Thyroid gland (tissue), 4 donors: ENCODE measurements at regions of chr17 and their contacts with region 1.

Region 1: DNA sequence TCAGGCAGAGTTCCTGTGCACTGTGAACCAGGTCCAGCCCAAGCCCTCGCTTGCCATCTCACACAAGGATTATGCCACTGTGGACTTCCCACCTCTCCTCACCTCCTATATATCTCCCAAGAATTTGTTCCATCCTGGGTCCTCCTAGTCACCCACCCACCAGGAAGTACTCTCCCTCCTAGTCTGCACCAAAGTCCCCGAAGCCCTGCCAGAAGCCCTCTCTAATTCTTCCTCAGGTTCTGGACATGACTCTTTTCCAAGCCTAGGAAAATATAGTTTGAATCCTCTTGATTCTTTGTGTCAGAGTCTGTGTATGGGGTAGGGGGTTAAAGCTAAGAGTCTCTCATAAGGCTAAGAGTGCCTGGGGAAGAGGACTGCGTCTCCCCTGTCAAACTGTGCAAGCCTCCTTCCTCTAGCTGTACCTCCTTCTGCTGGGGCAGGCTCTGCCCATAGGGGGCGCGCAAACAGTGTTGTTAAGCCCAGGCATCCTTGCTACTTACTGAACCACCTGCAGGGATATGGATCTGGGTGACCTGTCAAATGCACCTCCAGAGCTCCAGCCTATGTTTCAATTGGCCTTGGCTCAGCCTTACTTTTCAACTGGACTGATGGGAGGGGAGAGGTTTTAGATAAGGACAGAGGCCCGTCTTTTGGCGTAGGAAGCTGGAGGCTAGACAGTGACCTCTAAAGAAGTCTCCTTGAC is 16.6 kb upstream of the DLX4 start:
- DNase-seq: peak; percentile 85 to 89
- H3K4me3 ChIP-seq: no peak overlapping the region
- H3K27ac ChIP-seq: no peak overlapping the region
- H3K4me1 ChIP-seq: no peaks in the 10 kb centered on the region
- H3K27me3 ChIP-seq: no peaks in the 10 kb centered on the region
- CTCF ChIP-seq: peak; percentile 31 to 85 (median 78)
- POLR2A ChIP-seq: no peak

Region 2: GRCh38 chr17:49880291-49881053 is 71.9 kb before region 1 on chr17:
- intact Hi-C with region 1: loop called (anchors 5 kb)
- DNase-seq: peak; percentile 80 to 83
- H3K4me3 ChIP-seq: no peak overlapping the region
- H3K27ac ChIP-seq: no peak overlapping the region
- H3K4me1 ChIP-seq: peaks cover 16 to 26% of the 10 kb centered on the region in 2 donors
- H3K27me3 ChIP-seq: no peaks in the 10 kb centered on the region
- CTCF ChIP-seq: peak; percentile 89 to 100 (median 99)
- POLR2A ChIP-seq: no peak

Region 3: GRCh38 chr17:50564916-50565315 is 612.6 kb after region 1 on chr17:
- intact Hi-C with region 1: no loop called
- DNase-seq: peak; percentile 45 to 57
- H3K4me3 ChIP-seq: no peak overlapping the region
- H3K27ac ChIP-seq: peak overlapping the region in 1 of 3 donors; percentile 24
- H3K4me1 ChIP-seq: peaks cover 25 to 31% of the 10 kb centered on the region in 2 donors
- H3K27me3 ChIP-seq: peaks cover 10% of the 10 kb centered on the region
- CTCF ChIP-seq: no peak
- POLR2A ChIP-seq: no peak